Dendritic cell treated with granulocyte-macrophage colony-stimulating factor and Interleukin-4, amounts not matched to agents 40 ng/mL and 50 ng/mL, for 4 days (primary cell): ENCODE measurements at regions of chr20 and their contacts with region 1.

Region 1: GRCh38 chr20:2172305-2173175 is 70.9 kb downstream of the STK35 start:
- H3K4me3 Mint-ChIP-seq: no peak overlapping the region
- H3K27ac Mint-ChIP-seq: no peak overlapping the region
- H3K4me1 Mint-ChIP-seq: peaks cover 5% of the 10 kb centered on the region
- H3K27me3 Mint-ChIP-seq: peaks cover 36% of the 10 kb centered on the region

Region 2: DNA sequence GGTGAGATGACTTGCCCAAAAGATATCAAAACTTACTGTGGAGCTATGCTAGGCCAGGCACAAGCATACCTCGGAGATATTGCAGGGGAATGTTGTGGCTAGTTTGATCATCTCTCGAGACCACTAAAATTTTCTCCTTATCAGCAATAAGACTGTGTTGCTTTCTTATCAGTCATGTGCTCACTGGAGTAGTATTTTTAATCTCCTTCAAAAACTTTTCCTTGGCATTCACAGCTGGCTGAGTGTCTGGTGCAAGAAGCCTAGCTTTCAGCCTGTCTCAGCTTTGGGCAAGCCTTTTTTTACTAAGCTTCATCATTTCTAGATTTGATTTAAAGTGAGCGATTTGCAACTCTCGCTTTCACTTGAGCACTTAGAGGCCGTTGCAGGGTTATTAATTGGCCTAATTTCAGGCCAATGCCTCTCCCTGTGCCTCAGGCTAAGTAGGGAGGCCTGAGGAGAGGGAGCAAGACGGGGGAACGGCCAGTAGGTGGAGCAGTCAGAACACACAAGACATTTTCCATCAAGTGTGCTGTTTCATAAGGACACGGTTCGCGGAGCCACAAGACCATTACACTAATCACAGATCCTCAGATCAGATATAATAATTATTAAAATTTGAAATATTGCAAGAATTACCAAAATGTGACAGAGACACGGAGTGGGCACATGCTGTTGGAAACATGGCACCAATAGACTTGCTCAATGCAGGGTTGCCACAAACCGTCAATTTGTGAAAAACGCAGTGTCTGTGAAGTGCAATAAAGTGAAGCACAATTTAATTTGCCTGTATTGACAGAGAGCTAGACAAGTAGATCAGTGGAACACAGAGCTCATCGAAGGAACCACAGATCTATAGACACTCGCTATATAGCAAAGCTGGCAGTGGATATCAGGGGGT is 408.2 kb before region 1 on chr20:
- intact Hi-C with region 1: loop called (anchors 2 kb)
- H3K4me3 Mint-ChIP-seq: no peak overlapping the region
- H3K27ac Mint-ChIP-seq: no peak overlapping the region
- H3K4me1 Mint-ChIP-seq: peaks cover 17% of the 10 kb centered on the region
- H3K27me3 Mint-ChIP-seq: peaks cover 3% of the 10 kb centered on the region

Region 3: GRCh38 chr20:1965520-1966351 is 206.8 kb before region 1 on chr20:
- intact Hi-C with region 1: loop called (anchors 1 kb)
- H3K4me3 Mint-ChIP-seq: no peak overlapping the region
- H3K27ac Mint-ChIP-seq: peak overlapping the region; percentile 40
- H3K4me1 Mint-ChIP-seq: peaks cover 38% of the 10 kb centered on the region
- H3K27me3 Mint-ChIP-seq: peaks cover 1% of the 10 kb centered on the region

Region 4: DNA sequence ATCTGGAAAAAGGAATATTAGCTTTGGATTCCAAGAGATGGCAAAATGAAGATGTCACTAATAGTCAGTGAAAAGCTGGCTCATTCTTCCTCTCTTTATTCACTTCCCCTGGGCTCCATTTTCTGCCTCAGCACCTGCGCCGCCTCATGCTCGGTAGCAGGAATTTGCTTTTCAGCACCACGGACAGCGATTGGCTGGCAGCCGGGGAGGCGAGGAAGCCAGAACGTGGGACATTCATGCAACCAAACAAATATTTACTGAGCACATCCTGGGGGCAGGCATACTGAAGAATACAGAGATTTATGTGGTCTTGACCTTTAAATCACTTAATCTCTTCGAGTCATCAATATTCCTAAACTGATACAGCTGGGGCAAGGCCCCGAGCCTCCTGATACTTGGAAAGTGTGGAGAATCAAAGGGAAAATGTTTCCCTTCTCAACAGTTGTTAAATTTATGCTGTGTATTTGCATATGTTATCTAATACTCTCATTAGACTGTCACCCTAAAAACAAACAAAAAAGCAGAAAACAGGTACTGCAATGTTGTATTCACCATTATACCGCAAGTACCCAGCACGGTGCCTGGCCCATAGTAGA is 166.6 kb before region 1 on chr20:
- intact Hi-C with region 1: loop called (anchors 1 kb)
- H3K4me3 Mint-ChIP-seq: no peak overlapping the region
- H3K27ac Mint-ChIP-seq: no peak overlapping the region
- H3K4me1 Mint-ChIP-seq: no peaks in the 10 kb centered on the region
- H3K27me3 Mint-ChIP-seq: peaks cover 33% of the 10 kb centered on the region

Region 5: GRCh38 chr20:2093159-2093781 is 79.3 kb before region 1 on chr20:
- intact Hi-C with region 1: no loop called
- H3K4me3 Mint-ChIP-seq: no peak overlapping the region
- H3K27ac Mint-ChIP-seq: no peak overlapping the region
- H3K4me1 Mint-ChIP-seq: peaks cover 7% of the 10 kb centered on the region
- H3K27me3 Mint-ChIP-seq: peaks cover 28% of the 10 kb centered on the region

Region 6: DNA sequence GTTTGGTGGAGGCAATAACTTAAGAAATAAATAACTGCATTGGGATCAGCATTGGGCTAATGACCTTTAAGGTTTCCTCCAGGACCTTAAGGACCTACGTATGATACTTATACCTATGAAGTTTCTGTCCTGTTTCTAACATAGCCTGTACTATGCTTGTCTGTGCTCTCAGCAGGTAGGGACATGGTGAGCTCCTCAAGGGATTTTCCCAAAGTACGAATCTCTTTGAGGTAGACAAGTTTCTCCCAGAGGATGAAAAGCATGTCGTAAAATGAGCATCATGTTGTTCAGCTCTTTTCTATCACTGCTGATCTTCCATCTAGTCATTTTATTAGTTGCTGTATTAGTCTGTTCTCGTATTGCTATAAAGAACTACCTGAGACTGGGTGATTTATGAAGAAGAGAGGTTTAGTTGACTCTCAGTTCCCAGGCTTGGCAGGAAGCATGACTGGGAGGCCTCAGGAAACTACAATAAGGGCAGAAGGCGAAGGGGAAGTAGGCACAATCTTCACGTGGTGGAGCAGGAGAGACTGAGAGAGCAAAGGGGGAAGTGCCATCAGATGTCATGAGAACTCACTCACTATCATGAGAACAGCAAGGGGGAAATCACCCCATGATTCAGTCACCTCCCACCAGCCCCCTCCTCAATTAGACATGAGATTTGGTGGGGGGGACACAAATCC is 45.5 kb after region 1 on chr20:
- intact Hi-C with region 1: no loop called
- H3K4me3 Mint-ChIP-seq: no peak overlapping the region
- H3K27ac Mint-ChIP-seq: peak overlapping the region; percentile 16
- H3K4me1 Mint-ChIP-seq: peaks cover 51% of the 10 kb centered on the region
- H3K27me3 Mint-ChIP-seq: no peaks in the 10 kb centered on the region